ENCODE measurements at regions of chr16 and their contacts with region 1.

Region 1: DNA sequence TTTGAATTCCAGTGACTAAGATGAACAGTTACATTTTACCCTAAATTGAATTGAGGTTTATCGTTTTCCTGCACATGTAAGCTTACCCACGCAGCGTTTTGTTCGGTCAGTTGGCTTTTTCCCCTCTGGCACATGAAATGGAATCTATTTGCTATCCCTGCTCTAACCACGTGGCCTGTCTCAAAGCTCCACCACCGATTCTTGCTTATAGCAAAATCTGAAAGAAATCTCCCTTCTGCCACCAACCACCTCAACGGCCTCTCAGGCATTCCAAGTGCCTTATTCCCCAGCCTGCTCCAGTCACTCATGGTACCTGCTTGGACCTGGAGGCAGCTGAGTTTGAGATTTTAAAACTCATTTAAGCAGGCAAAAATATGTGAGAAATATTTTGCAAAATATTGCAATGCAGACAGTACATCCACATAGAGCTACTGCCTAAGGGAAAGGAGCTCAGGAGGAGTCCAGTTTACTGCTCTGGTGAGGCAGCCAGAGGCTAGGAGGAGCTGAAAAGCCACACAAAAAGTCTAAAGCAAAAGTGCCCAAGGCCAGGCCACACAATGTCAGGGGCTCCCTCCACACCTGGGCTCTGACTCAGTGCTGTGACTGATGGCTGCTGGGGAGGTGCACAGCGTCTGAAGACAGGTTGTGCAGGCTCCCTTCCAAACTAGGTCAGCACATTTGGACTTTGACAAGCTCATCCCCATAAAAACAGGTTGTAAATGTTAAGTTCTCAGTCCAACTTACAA is 26.4 kb downstream of the ARHGAP17 start:
- DNase-seq: peak in 3 of 5 donors; percentile 41 to 62 (median 43)
- ATAC-seq: peak in 3 of 4 donors; percentile 29 to 57 (median 57)
- H3K4me3 ChIP-seq: peak overlapping the region in 5 of 12 donors; percentile 0 to 30 (median 7)
- H3K27ac ChIP-seq: peak overlapping the region; percentile 65 to 90 (median 84)
- H3K4me1 ChIP-seq: peaks cover 40 to 100% (median 97%) of the 10 kb centered on the region in 12 donors
- H3K27me3 ChIP-seq: no peaks in the 10 kb centered on the region
- CTCF ChIP-seq: no peak
- POLR2A ChIP-seq: no peak

Region 2: GRCh38 chr16:25031441-25032307 is 42.9 kb after region 1 on chr16:
- intact Hi-C with region 1: loop called in 1 of 10 experiments (anchors 5 kb)
- DNase-seq: peak; percentile 88 to 93 (median 92)
- ATAC-seq: peak; percentile 99 to 100 (median 100)
- H3K4me3 ChIP-seq: peak overlapping the region; percentile 49 to 97 (median 84)
- H3K27ac ChIP-seq: peak overlapping the region in 11 of 12 donors; percentile 41 to 84 (median 71)
- H3K4me1 ChIP-seq: peaks cover 0 to 20% (median 10%) of the 10 kb centered on the region in 12 donors
- H3K27me3 ChIP-seq: no peaks in the 10 kb centered on the region
- CTCF ChIP-seq: peak in 1 of 12 donors; percentile 22
- POLR2A ChIP-seq: peak in 1 of 2 donors; percentile 69

Region 3: DNA sequence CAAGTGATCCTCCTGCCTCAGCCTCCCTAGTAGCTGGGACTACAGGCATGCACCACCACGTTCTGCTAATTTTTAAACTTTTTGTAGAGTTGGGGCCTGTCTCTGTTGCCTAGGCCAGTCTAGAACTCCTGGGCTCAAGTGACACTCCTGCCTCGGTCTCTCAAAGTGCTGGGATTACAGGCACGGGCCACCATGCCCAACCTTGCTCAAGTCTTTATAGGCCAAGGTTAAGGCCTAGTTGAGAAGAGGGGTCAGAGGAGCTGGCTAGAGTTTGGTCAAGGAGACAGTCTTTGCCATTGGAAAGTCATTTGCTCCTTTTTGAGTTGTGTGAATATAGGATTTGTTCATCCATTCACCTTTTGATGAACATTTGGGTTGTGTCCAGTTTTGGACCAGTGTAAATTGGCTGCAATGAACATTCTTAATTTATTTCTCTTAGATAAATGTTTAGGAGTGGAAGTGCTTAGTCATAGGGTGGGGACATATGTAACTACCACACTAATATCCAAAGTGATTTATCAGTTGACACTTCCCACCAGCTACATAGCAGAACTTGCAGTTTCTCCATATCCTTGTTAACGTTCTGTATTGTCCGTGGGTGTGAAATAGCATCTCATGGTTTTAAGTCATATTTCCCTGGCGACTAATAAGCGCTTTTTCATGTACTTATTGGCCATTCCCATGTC is 57.1 kb after region 1 on chr16:
- intact Hi-C with region 1: loop called in 3 of 10 experiments (anchors 5 kb)
- DNase-seq: no peak
- ATAC-seq: no peak
- H3K4me3 ChIP-seq: no peak overlapping the region
- H3K27ac ChIP-seq: no peak overlapping the region
- H3K4me1 ChIP-seq: peaks cover 3 to 29% (median 12%) of the 10 kb centered on the region in 12 donors
- H3K27me3 ChIP-seq: no peaks in the 10 kb centered on the region
- CTCF ChIP-seq: no peak
- POLR2A ChIP-seq: no peak